Activated CD8-positive, alpha-beta T cell treated with anti-CD3 and anti-CD28 coated beads for 36 hours (primary cell): ENCODE measurements at regions of chr2 and their contacts with region 1.

Region 1: GRCh38 chr2:69724540-69725159 is 17.3 kb upstream of the ANXA4 start:
- DNase-seq: peak; percentile 92
- ATAC-seq: peak; percentile 91
- H3K4me3 Mint-ChIP-seq: peak overlapping the region; percentile 64
- H3K27ac Mint-ChIP-seq: no peak overlapping the region
- H3K4me1 Mint-ChIP-seq: peaks cover 6% of the 10 kb centered on the region
- H3K27me3 Mint-ChIP-seq: no peaks in the 10 kb centered on the region
- CTCF ChIP-seq: peak; percentile 97

Region 2: GRCh38 chr2:69535817-69536241 is 188.8 kb before region 1 on chr2:
- CTCF ChIA-PET with region 1: interaction called, 11 read pairs
- POLR2A ChIA-PET with region 1: interaction called, 3 read pairs
- intact Hi-C with region 1: no loop called
- DNase-seq: no peak
- ATAC-seq: no peak
- H3K4me3 Mint-ChIP-seq: no peak overlapping the region
- H3K27ac Mint-ChIP-seq: peak overlapping the region; percentile 64
- H3K4me1 Mint-ChIP-seq: peaks cover 30% of the 10 kb centered on the region
- H3K27me3 Mint-ChIP-seq: no peaks in the 10 kb centered on the region
- CTCF ChIP-seq: no peak

Region 3: GRCh38 chr2:69694894-69695849 is 29.5 kb before region 1 on chr2:
- CTCF ChIA-PET with region 1: interaction called, 17 read pairs
- POLR2A ChIA-PET with region 1: no interaction called
- intact Hi-C with region 1: no loop called
- DNase-seq: no peak
- ATAC-seq: peak; percentile 71
- H3K4me3 Mint-ChIP-seq: no peak overlapping the region
- H3K27ac Mint-ChIP-seq: peak overlapping the region; percentile 72
- H3K4me1 Mint-ChIP-seq: peaks cover 75% of the 10 kb centered on the region
- H3K27me3 Mint-ChIP-seq: no peaks in the 10 kb centered on the region
- CTCF ChIP-seq: no peak

Region 4: DNA sequence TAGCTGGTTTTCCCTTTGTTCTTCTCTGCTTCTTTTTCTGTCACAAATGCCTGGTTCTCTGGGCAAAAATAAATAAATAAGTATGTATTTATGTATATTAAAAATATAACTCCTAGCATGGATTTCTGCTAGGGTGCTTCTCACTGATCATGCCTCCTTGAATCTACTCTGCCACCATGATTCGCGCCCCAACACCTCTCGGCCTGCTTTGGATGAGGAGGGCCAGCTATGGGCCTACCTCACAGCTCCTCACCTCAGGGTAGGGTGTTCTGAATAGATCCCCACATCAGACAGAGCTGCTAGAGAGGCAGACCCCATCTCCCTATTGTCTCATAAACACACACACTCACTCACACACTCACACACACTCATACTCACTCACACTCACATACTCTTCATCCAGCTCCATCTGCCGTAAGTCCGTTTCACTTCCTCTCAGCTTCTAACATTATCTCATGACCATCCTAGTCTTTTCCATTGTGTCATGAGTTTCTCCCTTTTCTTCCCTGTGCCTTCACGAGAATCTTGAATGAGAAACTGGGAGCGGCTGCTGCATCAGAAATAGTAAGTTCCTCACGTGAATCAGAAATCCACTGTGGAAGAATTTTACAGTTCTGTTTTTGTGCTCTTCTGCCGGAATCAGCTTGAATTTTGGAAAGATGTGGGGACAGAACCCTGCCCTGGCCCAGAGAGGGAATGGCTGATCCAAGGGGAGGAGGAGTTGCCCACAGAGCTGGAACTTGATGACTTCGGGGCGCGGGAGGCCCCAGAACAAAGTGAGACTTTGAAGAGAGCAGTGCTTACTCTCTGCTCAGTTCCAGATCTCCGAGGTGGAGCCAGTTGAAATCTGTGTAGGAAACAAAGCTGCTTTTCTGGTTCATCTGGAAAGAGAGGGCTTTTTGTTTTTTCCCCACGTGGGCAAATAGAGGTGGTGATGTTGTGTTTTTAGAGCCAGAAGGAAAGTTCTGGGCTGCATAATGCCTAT is 38.2 kb after region 1 on chr2:
- CTCF ChIA-PET with region 1: interaction called, 23 read pairs
- POLR2A ChIA-PET with region 1: interaction called, 6 read pairs
- intact Hi-C with region 1: no loop called
- DNase-seq: no peak
- ATAC-seq: no peak
- H3K4me3 Mint-ChIP-seq: no peak overlapping the region
- H3K27ac Mint-ChIP-seq: no peak overlapping the region
- H3K4me1 Mint-ChIP-seq: peaks cover 27% of the 10 kb centered on the region
- H3K27me3 Mint-ChIP-seq: no peaks in the 10 kb centered on the region
- CTCF ChIP-seq: no peak

Region 5: GRCh38 chr2:69798909-69799526 is 74.4 kb after region 1 on chr2:
- CTCF ChIA-PET with region 1: interaction called, 32 read pairs
- POLR2A ChIA-PET with region 1: no interaction called
- intact Hi-C with region 1: no loop called
- DNase-seq: no peak
- ATAC-seq: peak; percentile 30
- H3K4me3 Mint-ChIP-seq: no peak overlapping the region
- H3K27ac Mint-ChIP-seq: no peak overlapping the region
- H3K4me1 Mint-ChIP-seq: peaks cover 7% of the 10 kb centered on the region
- H3K27me3 Mint-ChIP-seq: peaks cover 4% of the 10 kb centered on the region
- CTCF ChIP-seq: no peak

Region 6: GRCh38 chr2:69829256-69830046 is 104.8 kb after region 1 on chr2 and contains the start of gene GMCL1:
- CTCF ChIA-PET with region 1: interaction called, 33 read pairs
- POLR2A ChIA-PET with region 1: interaction called, 3 read pairs
- intact Hi-C with region 1: no loop called
- DNase-seq: peak; percentile 99
- ATAC-seq: peak; percentile 96
- H3K4me3 Mint-ChIP-seq: peak within 1 kb of the TSS; percentile 86
- H3K27ac Mint-ChIP-seq: peak within 1 kb of the TSS; percentile 95
- H3K4me1 Mint-ChIP-seq: peaks cover 46% of the 10 kb centered on the region
- H3K27me3 Mint-ChIP-seq: no peaks in the 10 kb centered on the region
- CTCF ChIP-seq: no peak
- total RNA-seq, gene GMCL1: 18.1 to 20.4 TPM